Psoas muscle (tissue), 8 donors: ENCODE measurements at regions of chrX and their contacts with region 1.

Region 1: GRCh38 chrX:53594354-53594753 is 92.2 kb downstream of the HUWE1 start:
- DNase-seq: no peak
- ATAC-seq: no peak
- H3K4me3 ChIP-seq: no peak overlapping the region
- H3K27ac ChIP-seq: no peak overlapping the region
- H3K4me1 ChIP-seq: no peaks in the 10 kb centered on the region
- H3K27me3 ChIP-seq: peaks cover 0 to under 1% (median 0%) of the 10 kb centered on the region in 3 donors
- CTCF ChIP-seq: no peak

Region 2: GRCh38 chrX:53538781-53539180 is 55.6 kb before region 1 on chrX:
- intact Hi-C with region 1: loop called in 1 of 2 experiments (anchors 5 kb)
- DNase-seq: no peak
- ATAC-seq: no peak
- H3K4me3 ChIP-seq: no peak overlapping the region
- H3K27ac ChIP-seq: no peak overlapping the region
- H3K4me1 ChIP-seq: no peaks in the 10 kb centered on the region
- H3K27me3 ChIP-seq: peaks cover 0 to 12% (median 0%) of the 10 kb centered on the region in 3 donors
- CTCF ChIP-seq: no peak

Region 3: GRCh38 chrX:53556868-53557267 is 37.5 kb before region 1 on chrX:
- intact Hi-C with region 1: loop called in 1 of 2 experiments (anchors 5 kb)
- DNase-seq: no peak
- ATAC-seq: no peak
- H3K4me3 ChIP-seq: no peak overlapping the region
- H3K27ac ChIP-seq: no peak overlapping the region
- H3K4me1 ChIP-seq: no peaks in the 10 kb centered on the region
- H3K27me3 ChIP-seq: peaks cover 0 to 7% (median 0%) of the 10 kb centered on the region in 3 donors
- CTCF ChIP-seq: no peak